ENCODE measurements at regions of chr12 and their contacts with region 1.

Region 1: GRCh38 chr12:4118017-4118510 is 155.5 kb upstream of the CCND2 start:
- DNase-seq: no peak
- ATAC-seq: no peak
- H3K4me3 Mint-ChIP-seq: peak overlapping the region; percentile 38
- H3K27ac Mint-ChIP-seq: peak overlapping the region; percentile 86
- H3K4me1 Mint-ChIP-seq: peaks cover 63% of the 10 kb centered on the region
- H3K27me3 Mint-ChIP-seq: peaks cover 3% of the 10 kb centered on the region

Region 2: DNA sequence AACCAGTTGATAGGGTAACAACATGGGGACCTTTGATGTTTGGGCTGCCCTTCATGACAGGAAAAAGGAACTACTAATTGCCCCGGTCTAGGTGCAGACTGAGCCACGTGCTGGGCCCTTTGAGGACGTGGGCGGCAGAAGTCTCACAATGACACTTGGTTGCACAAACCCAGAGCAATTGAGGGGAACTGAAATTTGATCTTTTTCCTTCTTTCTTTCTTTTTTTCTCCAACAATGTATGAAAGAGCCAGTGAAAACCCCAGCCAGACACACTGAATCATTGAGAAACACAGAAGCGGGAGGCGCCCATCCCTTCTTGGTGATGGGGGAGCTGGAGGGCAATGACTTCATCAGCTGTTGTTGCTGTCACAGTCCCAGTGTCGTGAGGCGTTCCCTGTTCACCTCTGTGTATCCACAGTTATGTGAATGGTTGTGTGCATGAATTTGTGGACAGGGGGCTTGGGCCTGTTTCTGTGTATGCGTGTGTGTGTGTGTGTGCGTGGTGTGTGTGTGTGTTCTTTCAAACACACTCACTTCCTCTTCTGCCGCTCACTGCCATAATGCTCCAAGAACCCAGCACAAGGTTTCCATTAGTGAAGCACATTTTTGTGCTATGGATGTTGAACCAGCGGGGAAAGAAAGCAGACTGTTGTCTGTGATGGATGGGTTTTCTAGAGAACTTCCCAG is 18.0 kb after region 1 on chr12:
- CTCF ChIA-PET with region 1: interaction called, 6 read pairs
- POLR2A ChIA-PET with region 1: interaction called, 4 read pairs
- intact Hi-C with region 1: loop called (anchors 1 kb)
- DNase-seq: peak; percentile 90
- ATAC-seq: peak; percentile 91
- H3K4me3 Mint-ChIP-seq: peak overlapping the region; percentile 37
- H3K27ac Mint-ChIP-seq: peak overlapping the region; percentile 94
- H3K4me1 Mint-ChIP-seq: peaks cover 60% of the 10 kb centered on the region
- H3K27me3 Mint-ChIP-seq: no peaks in the 10 kb centered on the region

Region 3: GRCh38 chr12:4141348-4142270 is 23.5 kb after region 1 on chr12:
- CTCF ChIA-PET with region 1: interaction called, 31 read pairs
- POLR2A ChIA-PET with region 1: interaction called, 4 read pairs
- intact Hi-C with region 1: loop called (anchors 1 kb)
- DNase-seq: no peak
- ATAC-seq: peak; percentile 25
- H3K4me3 Mint-ChIP-seq: no peak overlapping the region
- H3K27ac Mint-ChIP-seq: peak overlapping the region; percentile 91
- H3K4me1 Mint-ChIP-seq: peaks cover 84% of the 10 kb centered on the region
- H3K27me3 Mint-ChIP-seq: no peaks in the 10 kb centered on the region

Region 4: GRCh38 chr12:4178424-4179170 is 60.5 kb after region 1 on chr12:
- CTCF ChIA-PET with region 1: interaction called, 3 read pairs
- POLR2A ChIA-PET with region 1: no interaction called
- intact Hi-C with region 1: loop called in 1 of 2 experiments (anchors 1 kb)
- DNase-seq: peak; percentile 52
- ATAC-seq: peak; percentile 98
- H3K4me3 Mint-ChIP-seq: peak overlapping the region; percentile 4
- H3K27ac Mint-ChIP-seq: peak overlapping the region; percentile 66
- H3K4me1 Mint-ChIP-seq: peaks cover 21% of the 10 kb centered on the region
- H3K27me3 Mint-ChIP-seq: no peaks in the 10 kb centered on the region

Region 5: GRCh38 chr12:4215229-4216186 is 97.4 kb after region 1 on chr12:
- CTCF ChIA-PET with region 1: no interaction called
- POLR2A ChIA-PET with region 1: no interaction called
- intact Hi-C with region 1: loop called in 1 of 2 experiments (anchors 5 kb)
- DNase-seq: peak; percentile 63
- ATAC-seq: peak; percentile 91
- H3K4me3 Mint-ChIP-seq: peak overlapping the region; percentile 43
- H3K27ac Mint-ChIP-seq: peak overlapping the region; percentile 84
- H3K4me1 Mint-ChIP-seq: peaks cover 29% of the 10 kb centered on the region
- H3K27me3 Mint-ChIP-seq: no peaks in the 10 kb centered on the region